ENCODE measurements at regions of chr1 and their contacts with region 1.

Region 1: GRCh38 chr1:226940029-226940805 is at the start of gene COQ8A:
- DNase-seq: peak; percentile 98 to 100
- H3K4me3 ChIP-seq: peak within 1 kb of the TSS; percentile 64 to 77
- H3K27ac ChIP-seq: peak within 1 kb of the TSS; percentile 92 to 98
- H3K4me1 ChIP-seq: peaks cover 0 to 42% (median 31%) of the 10 kb centered on the region in 4 donors
- H3K27me3 ChIP-seq: no peaks in the 10 kb centered on the region
- CTCF ChIP-seq: no peak

Region 2: GRCh38 chr1:226846801-226847200 is 93.4 kb before region 1 on chr1:
- intact Hi-C with region 1: no loop called
- DNase-seq: no peak
- H3K4me3 ChIP-seq: no peak overlapping the region
- H3K27ac ChIP-seq: no peak overlapping the region
- H3K4me1 ChIP-seq: no peaks in the 10 kb centered on the region
- H3K27me3 ChIP-seq: no peaks in the 10 kb centered on the region
- CTCF ChIP-seq: no peak

Region 3: GRCh38 chr1:226870401-226871279 is 69.6 kb before region 1 on chr1 and contains the start of gene PSEN2:
- intact Hi-C with region 1: loop called (anchors 5 kb)
- DNase-seq: peak; percentile 51 to 82
- H3K4me3 ChIP-seq: peak within 1 kb of the TSS; percentile 70 to 96
- H3K27ac ChIP-seq: peak within 1 kb of the TSS; percentile 72 to 87
- H3K4me1 ChIP-seq: peaks cover 0 to 16% (median 14%) of the 10 kb centered on the region in 4 donors
- H3K27me3 ChIP-seq: no peaks in the 10 kb centered on the region
- CTCF ChIP-seq: peak; percentile 20 to 30

Region 4: DNA sequence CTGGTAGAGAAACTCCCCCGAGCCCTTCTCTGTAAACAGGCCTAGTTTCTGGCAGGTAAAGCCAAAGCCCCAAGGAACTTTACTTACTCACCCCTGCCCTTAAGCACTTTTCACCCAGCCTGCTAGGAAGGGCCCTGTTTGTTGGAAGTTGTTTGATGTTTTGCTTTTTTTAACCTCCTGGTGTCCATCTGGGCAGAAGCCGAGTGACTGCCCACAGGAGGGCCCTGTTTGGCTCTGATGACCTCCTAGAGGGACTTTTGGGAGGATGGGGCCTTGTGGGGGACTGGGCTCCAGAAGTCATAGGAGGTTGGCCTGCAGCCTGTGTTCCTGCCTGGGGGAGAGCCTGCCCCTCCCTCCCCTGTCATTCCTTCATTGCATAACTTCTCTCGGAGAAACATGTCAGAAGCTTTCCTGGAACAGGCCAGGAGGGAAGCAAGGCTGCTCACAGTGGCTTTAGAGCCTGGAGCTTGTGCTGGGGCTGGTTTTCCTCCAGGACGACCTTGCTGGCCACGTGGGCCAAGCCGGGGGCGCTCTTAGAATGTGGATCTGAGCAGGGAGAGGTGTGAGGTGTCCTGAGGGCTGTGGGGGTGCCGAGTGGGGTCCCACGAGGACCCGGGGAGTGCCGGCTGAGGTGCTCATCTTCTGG is 33.8 kb after region 1 on chr1:
- intact Hi-C with region 1: loop called (anchors 1 kb)
- DNase-seq: peak; percentile 79 to 87
- H3K4me3 ChIP-seq: peak overlapping the region in 1 of 2 donors; percentile 20
- H3K27ac ChIP-seq: peak overlapping the region; percentile 89
- H3K4me1 ChIP-seq: peaks cover 0 to 36% (median 30%) of the 10 kb centered on the region in 4 donors
- H3K27me3 ChIP-seq: no peaks in the 10 kb centered on the region
- CTCF ChIP-seq: no peak